ENCODE measurements at regions of chr13 and their contacts with region 1.

Region 1: DNA sequence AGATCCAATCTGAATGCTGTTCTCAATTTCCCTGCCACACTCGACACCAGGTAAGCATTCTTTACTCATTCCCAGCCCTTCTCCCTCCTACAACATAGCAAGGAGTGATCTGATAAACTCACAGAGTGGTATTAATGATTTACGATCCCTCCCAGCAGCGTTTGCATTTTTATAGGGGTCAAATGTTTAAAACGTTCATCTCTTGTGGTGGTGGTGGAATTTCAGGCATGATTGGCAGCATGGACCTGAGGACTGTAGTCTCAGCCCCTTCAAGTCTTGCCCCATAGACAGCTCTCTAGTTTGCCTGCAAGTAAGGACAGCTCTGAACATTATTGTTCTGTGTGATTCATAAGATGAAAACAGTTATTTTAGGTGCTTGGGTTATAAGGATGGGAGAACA is 565.7 kb downstream of the EFNB2 start:
- DNase-seq: peak; percentile 74 to 87
- H3K4me3 ChIP-seq: no peak overlapping the region
- H3K4me3 Mint-ChIP-seq: peak overlapping the region; percentile 69
- H3K27ac Mint-ChIP-seq: peak overlapping the region; percentile 76
- H3K4me1 ChIP-seq: peaks cover 51% of the 10 kb centered on the region
- H3K4me1 Mint-ChIP-seq: peaks cover 46% of the 10 kb centered on the region
- H3K27me3 ChIP-seq: no peaks in the 10 kb centered on the region; the same call in 1 of the 2 replicates
- H3K27me3 Mint-ChIP-seq: no peaks in the 10 kb centered on the region
- CTCF ChIP-seq: no peak

Region 2: GRCh38 chr13:105918842-105919741 is 50.7 kb before region 1 on chr13:
- CTCF ChIA-PET with region 1: no interaction called
- POLR2A ChIA-PET with region 1: no interaction called
- intact Hi-C with region 1: loop called (anchors 2 kb)
- DNase-seq: peak; percentile 80 to 89
- H3K4me3 ChIP-seq: peak overlapping the region; percentile 27
- H3K4me3 Mint-ChIP-seq: peak overlapping the region; percentile 77
- H3K27ac Mint-ChIP-seq: peak overlapping the region; percentile 86
- H3K4me1 ChIP-seq: peaks cover 27% of the 10 kb centered on the region
- H3K4me1 Mint-ChIP-seq: peaks cover 16% of the 10 kb centered on the region
- H3K27me3 ChIP-seq: no peaks in the 10 kb centered on the region
- H3K27me3 Mint-ChIP-seq: no peaks in the 10 kb centered on the region
- CTCF ChIP-seq: no peak